CD4-positive, alpha-beta memory T cell (primary cell): ENCODE measurements at regions of chr17 and their contacts with region 1.

Region 1: DNA sequence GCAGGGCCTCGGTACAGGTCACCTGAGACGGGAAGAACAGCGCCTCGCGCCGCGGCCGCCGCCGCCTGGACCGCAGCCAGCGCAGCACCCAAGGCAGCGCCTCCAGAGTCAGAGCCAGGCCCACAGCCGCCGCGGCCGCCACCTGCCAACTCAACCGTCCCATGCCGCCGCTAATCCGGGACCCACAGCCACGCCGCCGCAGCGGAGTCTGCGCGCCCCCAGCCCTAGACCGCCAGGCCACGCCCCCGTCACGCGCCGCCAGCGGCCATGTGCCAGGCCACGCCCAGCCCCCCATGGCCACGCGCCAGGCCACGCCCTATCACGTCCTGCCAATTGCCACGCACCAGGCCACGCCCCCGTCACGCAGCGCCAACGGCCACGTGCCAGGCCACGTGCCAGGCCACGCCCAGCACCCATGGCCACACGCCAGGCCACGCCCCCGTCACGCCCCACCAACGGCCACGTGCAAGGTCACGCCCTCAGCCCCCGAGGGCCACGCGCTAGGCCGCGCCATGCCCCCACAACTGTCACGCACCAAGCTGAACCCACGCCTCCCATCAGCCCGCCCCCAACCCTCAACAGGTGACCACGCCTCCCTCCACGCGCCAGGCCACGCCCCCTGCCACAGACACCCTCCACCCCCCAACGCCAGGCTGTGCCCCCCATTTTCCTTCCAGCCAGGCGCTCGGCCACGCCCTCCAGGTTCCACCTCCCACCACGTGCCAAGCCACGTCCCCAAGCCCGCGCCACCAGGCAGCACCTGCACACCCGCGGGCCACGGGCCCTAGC is at the start of gene PLD6:
- DNase-seq: peak; percentile 94 to 95 (median 95)
- H3K4me3 ChIP-seq: peak within 1 kb of the TSS; percentile 61 to 72
- H3K4me3 Mint-ChIP-seq: peak within 1 kb of the TSS; percentile 85 to 94 (median 90)
- H3K27ac ChIP-seq: peak within 1 kb of the TSS; percentile 72
- H3K27ac Mint-ChIP-seq: peak within 1 kb of the TSS; percentile 91 to 97 (median 96)
- H3K4me1 ChIP-seq: peaks cover 28% of the 10 kb centered on the region
- H3K4me1 Mint-ChIP-seq: peaks cover 14 to 44% (median 31%) of the 10 kb centered on the region in 4 donors
- H3K27me3 ChIP-seq: no peaks in the 10 kb centered on the region
- H3K27me3 Mint-ChIP-seq: no peaks in the 10 kb centered on the region
- total RNA-seq, gene PLD6: 12.8 to 13.9 TPM

Region 2: GRCh38 chr17:17171991-17172939 is 34.1 kb before region 1 on chr17:
- CTCF ChIA-PET with region 1: interaction called, 4 read pairs
- POLR2A ChIA-PET with region 1: interaction called, 131 read pairs
- intact Hi-C with region 1: loop called (anchors 2 kb)
- DNase-seq: no peak
- H3K4me3 ChIP-seq: no peak overlapping the region
- H3K4me3 Mint-ChIP-seq: peak overlapping the region in 7 of 8 donors; percentile 20 to 77 (median 66)
- H3K27ac ChIP-seq: peak overlapping the region; percentile 46
- H3K27ac Mint-ChIP-seq: peak overlapping the region; percentile 81 to 93 (median 91)
- H3K4me1 ChIP-seq: peaks cover 87% of the 10 kb centered on the region
- H3K4me1 Mint-ChIP-seq: peaks cover 53 to 94% (median 71%) of the 10 kb centered on the region in 4 donors
- H3K27me3 ChIP-seq: no peaks in the 10 kb centered on the region
- H3K27me3 Mint-ChIP-seq: no peaks in the 10 kb centered on the region

Region 3: GRCh38 chr17:17237026-17237799 is 30.9 kb after region 1 on chr17 and contains the start of gene FLCN:
- CTCF ChIA-PET with region 1: interaction called, 3 read pairs
- POLR2A ChIA-PET with region 1: interaction called, 5 read pairs
- intact Hi-C with region 1: loop called (anchors 2 kb)
- DNase-seq: peak; percentile 91 to 95 (median 92)
- H3K4me3 ChIP-seq: peak within 1 kb of the TSS; percentile 79 to 82
- H3K4me3 Mint-ChIP-seq: peak within 1 kb of the TSS; percentile 90 to 97 (median 95)
- H3K27ac ChIP-seq: peak within 1 kb of the TSS; percentile 94
- H3K27ac Mint-ChIP-seq: peak within 1 kb of the TSS; percentile 91 to 99 (median 99)
- H3K4me1 ChIP-seq: peaks cover 25% of the 10 kb centered on the region
- H3K4me1 Mint-ChIP-seq: peaks cover 15 to 35% (median 23%) of the 10 kb centered on the region in 4 donors
- H3K27me3 ChIP-seq: no peaks in the 10 kb centered on the region
- H3K27me3 Mint-ChIP-seq: no peaks in the 10 kb centered on the region
- total RNA-seq, gene FLCN: 94.4 to 95.0 TPM